ENCODE measurements at regions of chr18 and their contacts with region 1.

Region 1: DNA sequence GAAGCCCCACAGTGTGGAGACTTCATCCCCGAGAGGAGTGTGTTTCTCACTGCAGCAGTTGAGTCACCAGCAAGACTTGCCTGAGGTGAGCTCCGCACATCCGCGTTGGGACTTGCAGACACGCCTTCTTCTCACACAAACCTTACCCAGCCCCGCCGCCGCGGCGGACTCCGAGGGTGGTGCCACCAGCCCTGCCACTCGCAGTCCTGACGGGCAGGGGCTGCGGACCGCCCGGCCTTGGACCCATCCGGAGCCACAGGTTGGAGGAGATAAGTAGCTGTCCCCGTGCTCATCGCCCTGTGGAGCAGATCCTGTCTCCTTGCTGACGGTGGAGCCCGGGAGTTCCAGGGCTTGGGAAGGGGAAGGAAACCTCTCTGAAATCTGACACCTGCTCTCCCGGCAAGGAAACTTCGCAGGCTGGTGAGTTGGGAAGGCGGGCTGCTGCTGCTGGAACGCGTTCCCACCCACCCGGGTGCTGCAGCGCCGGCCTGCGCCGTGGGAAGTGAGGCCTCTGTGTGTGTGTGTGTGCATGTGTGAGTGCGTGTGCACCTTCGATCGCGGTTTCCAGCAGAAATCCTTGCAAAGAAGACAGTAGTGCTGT is at the start of gene RAB27B:
- DNase-seq: peak; percentile 96
- H3K4me3 ChIP-seq: peak within 1 kb of the TSS; percentile 76 to 85 (median 79)
- H3K27ac ChIP-seq: peak within 1 kb of the TSS; percentile 90
- H3K4me1 ChIP-seq: peaks cover 27% of the 10 kb centered on the region
- H3K27me3 ChIP-seq: no peaks in the 10 kb centered on the region
- CTCF ChIP-seq: no peak
- total RNA-seq, gene RAB27B: 1.8 to 19.3 TPM

Region 2: GRCh38 chr18:54717673-54718407 is 110.5 kb before region 1 on chr18:
- CTCF ChIA-PET with region 1: no interaction called
- dilution Hi-C with region 1: no loop called
- in situ Hi-C with region 1: no loop called
- intact Hi-C with region 1: loop called (anchors 10 kb)
- DNase-seq: no peak
- H3K4me3 ChIP-seq: no peak overlapping the region
- H3K27ac ChIP-seq: no peak overlapping the region
- H3K4me1 ChIP-seq: peaks cover 4% of the 10 kb centered on the region
- H3K27me3 ChIP-seq: no peaks in the 10 kb centered on the region
- CTCF ChIP-seq: no peak

Region 3: GRCh38 chr18:54734059-54734458 is 94.3 kb before region 1 on chr18:
- CTCF ChIA-PET with region 1: no interaction called
- dilution Hi-C with region 1: no loop called
- in situ Hi-C with region 1: no loop called
- intact Hi-C with region 1: no loop called
- DNase-seq: peak; percentile 91
- H3K4me3 ChIP-seq: no peak overlapping the region
- H3K27ac ChIP-seq: peak overlapping the region; percentile 5
- H3K4me1 ChIP-seq: peaks cover 6% of the 10 kb centered on the region
- H3K27me3 ChIP-seq: no peaks in the 10 kb centered on the region
- CTCF ChIP-seq: no peak

Region 4: GRCh38 chr18:54880395-54881095 is 52.2 kb after region 1 on chr18:
- CTCF ChIA-PET with region 1: no interaction called
- dilution Hi-C with region 1: no loop called
- in situ Hi-C with region 1: no loop called
- intact Hi-C with region 1: loop called (anchors 2 kb)
- DNase-seq: peak; percentile 72
- H3K4me3 ChIP-seq: no peak overlapping the region
- H3K27ac ChIP-seq: no peak overlapping the region
- H3K4me1 ChIP-seq: no peaks in the 10 kb centered on the region
- H3K27me3 ChIP-seq: no peaks in the 10 kb centered on the region
- CTCF ChIP-seq: no peak

Region 5: DNA sequence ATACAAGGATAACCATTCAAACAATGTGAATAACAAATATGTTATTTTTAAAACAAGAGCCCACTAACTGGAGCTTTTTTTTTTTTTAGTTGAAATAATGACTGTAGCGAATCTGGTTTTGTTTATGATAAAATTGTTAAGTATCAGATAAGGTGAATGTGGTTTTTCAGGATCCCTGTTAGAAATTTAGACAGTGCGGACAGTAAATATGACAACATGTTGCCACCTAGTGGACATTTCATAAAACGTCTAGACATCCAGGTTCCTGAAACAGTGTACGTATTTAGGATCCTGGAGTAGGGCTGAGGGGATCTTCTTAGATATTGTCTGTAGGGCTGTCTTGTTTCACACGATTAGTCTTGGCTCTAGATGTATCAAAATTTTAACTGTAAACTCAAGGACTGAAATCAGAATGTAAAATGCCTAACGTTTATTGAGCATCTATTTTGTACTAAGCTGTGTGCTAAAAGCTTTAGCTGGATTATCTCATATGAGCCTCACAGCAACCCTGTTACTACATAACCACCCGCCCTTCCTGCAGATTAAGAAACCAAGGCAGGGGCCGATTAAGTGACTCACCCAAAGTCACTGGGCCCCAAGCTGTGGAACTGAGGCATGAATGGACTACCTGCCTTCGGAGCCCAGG is 154.8 kb after region 1 on chr18:
- CTCF ChIA-PET with region 1: no interaction called
- dilution Hi-C with region 1: no loop called
- in situ Hi-C with region 1: no loop called
- intact Hi-C with region 1: loop called (anchors 10 kb)
- DNase-seq: peak; percentile 48
- H3K4me3 ChIP-seq: no peak overlapping the region
- H3K27ac ChIP-seq: no peak overlapping the region
- H3K4me1 ChIP-seq: no peaks in the 10 kb centered on the region
- H3K27me3 ChIP-seq: no peaks in the 10 kb centered on the region
- CTCF ChIP-seq: peak; percentile 52 to 62